ENCODE measurements at regions of chr20 and their contacts with region 1.

Region 1: DNA sequence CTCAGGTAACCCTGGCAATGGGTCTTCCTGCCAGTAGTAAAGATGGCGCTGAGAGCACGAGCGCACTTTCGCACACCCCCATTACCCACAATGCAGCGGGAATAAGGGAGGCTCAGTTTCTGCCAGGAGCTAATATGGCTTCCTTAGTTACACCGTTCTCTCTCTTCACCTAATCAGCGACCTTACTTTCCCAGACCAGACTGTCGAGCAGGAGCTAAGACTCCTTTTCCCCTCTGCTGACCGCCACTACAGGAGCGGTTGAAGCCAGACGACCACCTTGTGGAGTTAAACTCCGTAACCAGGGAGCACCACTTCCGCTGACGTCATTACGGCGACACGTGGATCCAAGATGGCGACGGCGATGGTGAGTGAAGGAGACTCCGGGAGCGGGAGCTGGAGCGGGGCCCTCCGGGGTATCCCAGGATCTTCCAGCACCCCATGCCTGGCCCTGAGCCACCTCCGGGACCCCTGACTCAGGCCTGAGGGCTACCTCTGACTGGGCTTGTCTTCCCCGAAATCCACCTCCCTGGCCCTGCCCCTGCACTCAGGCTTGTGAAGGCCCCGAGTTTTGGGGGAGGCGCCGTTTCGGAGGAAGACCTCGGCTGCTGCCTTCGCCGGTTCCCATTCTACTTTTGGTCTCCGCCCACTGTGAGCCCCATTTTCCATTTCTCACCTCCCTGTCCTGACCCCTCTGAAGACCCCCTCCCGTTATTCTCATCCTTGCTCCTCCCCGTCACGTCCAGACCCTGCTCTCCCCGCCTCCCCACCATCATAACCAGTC is at the start of gene TM9SF4:
- DNase-seq: peak; percentile 89 to 93 (median 92)
- ATAC-seq: peak; percentile 91 to 96 (median 94)
- H3K4me3 ChIP-seq: peak within 1 kb of the TSS; percentile 74 to 98 (median 82)
- H3K27ac ChIP-seq: peak within 1 kb of the TSS; percentile 94 to 99 (median 98)
- H3K4me1 ChIP-seq: peaks cover 0 to 46% (median 18%) of the 10 kb centered on the region in 12 donors
- H3K27me3 ChIP-seq: no peaks in the 10 kb centered on the region
- CTCF ChIP-seq: no peak
- POLR2A ChIP-seq: no peak
- total RNA-seq, gene TM9SF4: 25.6 to 37.9 (median 30.0) TPM

Region 2: DNA sequence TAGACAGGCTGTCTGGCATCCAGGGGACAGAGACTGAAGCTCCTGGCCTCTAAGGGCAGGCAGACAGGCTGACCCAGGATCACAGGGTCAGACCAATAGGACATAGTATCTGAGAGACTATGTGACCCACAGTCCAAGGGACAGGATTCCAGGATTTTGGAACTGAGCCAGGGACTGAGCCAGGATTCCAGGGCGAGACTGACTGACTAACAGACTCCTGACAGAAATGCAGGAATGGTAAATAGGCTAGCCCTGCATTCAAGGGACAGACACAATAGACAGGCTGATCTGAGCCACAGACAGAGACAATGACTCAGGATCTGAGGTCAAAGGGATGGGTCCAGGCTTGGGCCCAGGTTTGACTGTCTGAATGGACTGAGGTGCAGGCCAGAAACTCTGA is 121.8 kb before region 1 on chr20:
- intact Hi-C with region 1: no loop called
- DNase-seq: no peak
- ATAC-seq: peak in 1 of 4 donors; percentile 22
- H3K4me3 ChIP-seq: no peak overlapping the region
- H3K27ac ChIP-seq: no peak overlapping the region
- H3K4me1 ChIP-seq: no peaks in the 10 kb centered on the region
- H3K27me3 ChIP-seq: no peaks in the 10 kb centered on the region
- CTCF ChIP-seq: no peak
- POLR2A ChIP-seq: no peak

Region 3: DNA sequence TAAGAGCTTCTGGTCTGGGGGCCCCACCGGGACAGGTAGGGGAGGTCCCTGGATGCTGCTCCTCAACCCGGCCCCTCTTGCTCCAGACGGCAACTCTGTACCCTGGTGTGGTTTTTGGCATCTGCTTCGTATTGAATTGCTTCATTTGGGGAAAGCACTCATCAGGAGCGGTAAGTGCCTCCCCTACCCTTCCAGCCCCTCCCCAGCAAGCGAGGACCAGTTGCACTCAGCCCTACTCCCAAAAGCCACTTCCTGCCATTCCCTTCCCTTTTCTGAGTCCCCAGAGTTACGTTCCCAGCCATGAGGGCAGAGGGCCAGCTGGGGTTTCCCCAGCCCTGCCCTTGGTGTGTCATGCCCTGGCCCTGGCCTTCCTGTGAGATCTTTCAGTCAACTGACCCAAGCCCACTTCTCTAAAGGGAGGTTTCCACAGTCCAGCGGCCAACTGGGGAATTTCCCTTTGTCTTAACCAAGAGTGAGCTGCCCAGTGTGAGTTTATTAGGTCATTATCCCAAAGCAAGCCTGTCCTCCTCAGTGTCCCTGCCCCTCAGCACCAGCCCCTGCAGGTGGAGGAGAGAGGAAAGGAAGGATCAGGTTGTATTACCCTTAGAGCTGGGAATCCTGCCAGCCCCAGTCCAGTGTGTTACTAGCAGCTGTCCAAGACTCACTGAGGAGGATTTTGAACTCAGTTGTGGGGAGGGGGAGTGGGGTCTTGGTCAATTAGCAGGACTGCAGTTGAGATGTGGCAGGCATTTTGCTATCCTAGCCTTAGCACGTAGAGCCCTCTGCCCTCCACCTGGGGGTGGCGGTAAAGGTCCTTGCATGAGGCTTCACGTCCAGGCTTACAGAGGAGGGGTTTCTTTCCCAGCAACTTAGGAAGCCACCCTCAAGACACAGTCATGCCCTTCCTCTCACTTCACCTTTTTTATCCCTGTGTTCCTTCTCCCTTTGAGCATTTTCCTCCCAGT is 45.7 kb after region 1 on chr20:
- intact Hi-C with region 1: no loop called
- DNase-seq: peak; percentile 84 to 92 (median 89)
- ATAC-seq: peak; percentile 77 to 96 (median 94)
- H3K4me3 ChIP-seq: no peak overlapping the region
- H3K27ac ChIP-seq: peak overlapping the region in 11 of 12 donors; percentile 18 to 72 (median 57)
- H3K4me1 ChIP-seq: peaks cover 3 to 24% (median 14%) of the 10 kb centered on the region in 12 donors
- H3K27me3 ChIP-seq: no peaks in the 10 kb centered on the region
- CTCF ChIP-seq: peak in 11 of 12 donors; percentile 4 to 50 (median 33)
- POLR2A ChIP-seq: no peak

Region 4: DNA sequence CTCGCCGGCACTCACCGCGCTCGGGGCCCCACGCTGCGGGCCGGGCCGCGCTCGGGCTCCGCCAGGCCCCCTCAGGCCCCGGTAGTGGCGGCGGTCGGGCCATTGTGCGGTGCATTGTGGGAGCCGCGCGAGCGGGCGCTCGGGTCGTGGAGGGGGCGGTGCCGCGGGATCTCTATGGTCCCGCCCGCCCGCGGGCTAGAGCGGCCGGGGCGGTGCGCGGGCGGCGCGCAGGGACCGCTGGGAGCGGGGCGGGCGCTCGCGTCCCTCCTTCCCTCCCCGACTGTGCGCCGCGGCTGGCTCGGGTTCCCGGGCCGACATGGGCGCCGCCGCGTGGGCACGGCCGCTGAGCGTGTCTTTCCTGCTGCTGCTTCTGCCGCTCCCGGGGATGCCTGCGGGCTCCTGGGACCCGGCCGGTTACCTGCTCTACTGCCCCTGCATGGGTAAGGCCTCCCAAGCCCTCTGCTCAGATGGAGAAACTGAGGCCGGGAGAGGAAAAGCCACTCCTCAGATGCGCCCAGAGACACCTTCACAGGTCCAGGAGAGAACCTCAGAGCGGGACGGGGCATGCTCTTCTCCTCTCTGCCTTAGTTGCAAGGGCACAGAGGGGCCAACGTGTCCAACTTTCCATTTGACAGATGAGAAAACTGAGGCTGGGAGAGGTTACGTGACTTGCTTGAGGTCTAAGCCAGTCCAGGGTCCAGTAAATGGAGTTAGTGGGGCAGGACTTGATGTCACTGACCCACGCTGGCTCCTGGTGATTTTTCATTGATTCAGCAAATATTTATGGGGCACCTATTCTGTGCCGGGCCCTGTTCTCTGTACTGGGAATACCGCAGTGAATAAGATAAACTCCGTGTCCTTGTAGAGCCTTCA is 98.3 kb after region 1 on chr20 and contains the starts of genes PLAGL2 and POFUT1:
- intact Hi-C with region 1: loop called in 4 of 10 experiments (anchors 2 to 5 kb)
- DNase-seq: peak; percentile 90 to 95 (median 93)
- ATAC-seq: peak; percentile 84 to 98 (median 96)
- H3K4me3 ChIP-seq: peak within 1 kb of the TSS; percentile 70 to 99 (median 96)
- H3K27ac ChIP-seq: peak within 1 kb of the TSS; percentile 85 to 99 (median 93)
- H3K4me1 ChIP-seq: peaks cover 10 to 57% (median 45%) of the 10 kb centered on the region in 12 donors
- H3K27me3 ChIP-seq: no peaks in the 10 kb centered on the region
- CTCF ChIP-seq: peak in 8 of 12 donors; percentile 26 to 46 (median 32)
- POLR2A ChIP-seq: peak in 1 of 2 donors; percentile 81
- total RNA-seq, gene PLAGL2: 4.4 to 9.9 (median 7.8) TPM
- total RNA-seq, gene POFUT1: 26.0 to 48.5 (median 27.5) TPM